ENCODE measurements at regions of chr19 and their contacts with region 1.

Region 1: DNA sequence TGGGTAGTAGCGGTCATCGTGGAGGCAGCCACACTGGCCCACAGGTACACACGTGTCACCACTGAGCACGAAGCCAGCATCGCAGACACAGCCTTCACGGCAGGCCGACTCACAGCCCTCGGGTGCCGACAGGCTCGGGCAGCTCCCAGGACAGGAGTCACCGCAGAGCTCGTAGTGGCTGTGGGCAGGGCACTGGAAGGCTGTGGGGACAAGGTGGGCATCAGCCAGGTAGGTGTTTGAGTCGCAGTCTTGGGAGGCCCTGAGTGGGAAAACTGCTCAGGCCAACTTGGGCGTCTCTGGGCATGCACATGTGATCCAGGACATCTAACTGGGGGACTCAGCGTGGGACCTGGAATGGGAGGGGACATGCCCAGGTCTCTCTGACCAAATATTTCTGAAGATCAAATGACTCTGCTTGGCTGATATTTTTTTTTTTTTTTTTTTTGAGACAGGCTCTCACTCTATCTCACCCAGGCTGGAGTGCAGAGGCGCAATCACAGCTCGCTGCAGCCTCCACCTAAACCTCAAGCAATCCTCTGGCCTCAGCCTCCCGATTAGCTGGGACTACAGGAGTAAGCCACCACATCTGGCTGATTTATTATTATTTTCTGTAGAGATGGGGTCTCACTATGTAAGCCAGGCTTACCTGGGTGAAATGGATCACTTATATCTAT is 43.8 kb upstream of the FBL start:
- DNase-seq: no peak
- H3K4me3 ChIP-seq: no peak overlapping the region
- H3K27ac ChIP-seq: no peak overlapping the region
- H3K4me1 ChIP-seq: no peaks in the 10 kb centered on the region
- H3K27me3 ChIP-seq: peaks cover 0 to 22% (median 0%) of the 10 kb centered on the region in 4 donors
- CTCF ChIP-seq: no peak
- POLR2A ChIP-seq: no peak

Region 2: GRCh38 chr19:39878398-39878797 is 11.6 kb before region 1 on chr19:
- intact Hi-C with region 1: loop called (anchors 2 kb)
- DNase-seq: no peak
- H3K4me3 ChIP-seq: no peak overlapping the region
- H3K27ac ChIP-seq: no peak overlapping the region
- H3K4me1 ChIP-seq: no peaks in the 10 kb centered on the region
- H3K27me3 ChIP-seq: peaks cover 0 to 11% (median 0%) of the 10 kb centered on the region in 4 donors
- CTCF ChIP-seq: no peak
- POLR2A ChIP-seq: no peak